Posterior vena cava (tissue), 2 donors: ENCODE measurements at regions of chr20 and their contacts with region 1.

Region 1: GRCh38 chr20:51525241-51526129 is 17.0 kb downstream of the NFATC2 start:
- DNase-seq: no peak

Region 2: DNA sequence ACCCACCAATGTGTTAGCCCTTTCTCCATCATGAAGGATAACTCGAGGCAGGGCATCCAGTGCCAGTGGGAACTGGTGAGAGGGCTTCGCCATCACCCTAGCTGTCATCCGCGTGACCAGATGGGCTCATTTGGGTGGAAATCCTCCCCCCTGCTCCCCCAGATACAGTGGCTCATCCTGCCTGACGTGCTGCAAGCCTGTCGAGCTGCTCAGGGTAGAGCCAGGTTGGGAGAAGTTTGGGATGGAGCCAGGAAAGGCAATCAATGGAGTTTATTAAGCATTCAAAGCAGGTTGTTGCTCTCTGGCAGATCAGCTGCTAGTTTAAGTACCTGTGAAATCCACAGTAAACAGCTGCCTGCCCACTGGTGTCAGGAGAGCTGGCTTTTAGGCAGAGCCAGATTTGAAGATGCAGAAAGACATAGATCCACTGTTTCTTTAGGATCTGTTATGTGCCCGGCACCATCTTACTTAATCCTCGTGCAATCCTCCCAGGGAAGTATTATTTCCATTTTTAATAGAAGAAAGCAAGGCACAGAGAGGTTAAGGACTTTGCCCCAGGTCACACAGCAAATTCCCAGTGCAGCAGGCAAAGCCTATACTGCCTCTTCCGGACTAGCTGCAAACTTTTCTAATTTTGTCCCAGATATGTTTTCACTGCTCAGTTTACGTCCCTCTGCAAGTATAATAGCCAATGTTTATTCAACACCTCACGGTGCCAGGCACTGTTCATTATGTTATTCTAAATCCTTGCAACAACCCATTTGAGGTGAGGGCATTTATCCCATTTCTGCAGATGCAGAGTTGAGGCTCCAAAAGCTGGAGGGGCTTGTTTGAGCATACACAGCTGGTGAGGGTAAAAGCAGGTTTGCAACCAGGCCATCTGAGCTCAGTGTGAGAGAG is 448.4 kb before region 1 on chr20:
- intact Hi-C with region 1: no loop called
- DNase-seq: no peak

Region 3: DNA sequence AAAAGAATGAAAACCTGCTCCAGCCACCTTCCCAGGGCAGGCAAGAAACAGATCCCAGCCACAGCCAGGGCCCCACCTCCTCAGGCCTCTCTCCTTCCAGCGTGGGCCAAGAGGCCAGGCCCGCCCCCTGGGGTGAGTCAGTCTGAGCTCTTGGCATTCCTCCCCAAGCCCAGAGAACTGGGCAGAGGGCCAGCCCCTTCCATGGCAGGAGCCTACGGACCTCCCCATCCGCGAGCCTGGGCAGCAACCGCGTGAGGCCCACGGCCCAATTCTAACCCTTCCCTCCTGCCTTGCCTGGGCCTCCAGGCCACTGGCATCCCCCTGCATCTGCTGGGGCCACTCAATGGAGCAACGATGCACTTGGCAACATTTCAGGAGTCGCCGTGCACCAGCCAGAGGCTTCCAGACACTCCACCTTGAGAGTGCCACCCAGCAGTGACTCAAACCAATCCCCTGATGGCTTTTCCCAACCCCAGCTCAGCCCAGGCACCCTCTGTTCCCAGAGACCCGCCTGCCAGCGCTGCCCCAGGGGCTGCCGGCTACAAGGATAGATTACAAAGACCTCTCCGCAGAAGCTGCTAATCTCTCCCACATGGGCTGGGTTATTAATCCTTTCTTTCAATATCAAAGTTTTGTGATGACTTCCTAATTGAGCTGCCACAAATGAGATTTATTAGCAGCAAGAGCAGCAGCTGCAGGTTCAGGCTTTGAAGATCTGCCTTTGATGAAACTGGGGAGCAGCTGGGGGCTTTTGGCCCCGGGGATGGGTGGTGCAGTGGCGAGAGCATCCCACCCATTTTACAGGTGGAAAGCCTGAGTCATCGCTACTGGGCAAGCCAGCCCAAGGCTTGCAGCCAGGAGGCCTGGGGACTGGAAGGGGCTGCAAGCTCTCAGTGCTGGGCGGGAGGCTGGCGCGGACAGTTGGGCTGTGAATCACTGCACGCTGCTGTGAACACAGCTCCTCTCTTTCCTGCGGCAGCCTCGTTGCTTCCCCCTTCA is 68.7 kb before region 1 on chr20:
- intact Hi-C with region 1: no loop called
- DNase-seq: peak; percentile 98

Region 4: GRCh38 chr20:52959125-52959524 is 1433.6 kb after region 1 on chr20:
- intact Hi-C with region 1: loop called in 1 of 2 experiments (anchors 10 kb)
- DNase-seq: no peak